Posterior vena cava (tissue), 2 donors: ENCODE measurements at regions of chr19 and their contacts with region 1.

Region 1: DNA sequence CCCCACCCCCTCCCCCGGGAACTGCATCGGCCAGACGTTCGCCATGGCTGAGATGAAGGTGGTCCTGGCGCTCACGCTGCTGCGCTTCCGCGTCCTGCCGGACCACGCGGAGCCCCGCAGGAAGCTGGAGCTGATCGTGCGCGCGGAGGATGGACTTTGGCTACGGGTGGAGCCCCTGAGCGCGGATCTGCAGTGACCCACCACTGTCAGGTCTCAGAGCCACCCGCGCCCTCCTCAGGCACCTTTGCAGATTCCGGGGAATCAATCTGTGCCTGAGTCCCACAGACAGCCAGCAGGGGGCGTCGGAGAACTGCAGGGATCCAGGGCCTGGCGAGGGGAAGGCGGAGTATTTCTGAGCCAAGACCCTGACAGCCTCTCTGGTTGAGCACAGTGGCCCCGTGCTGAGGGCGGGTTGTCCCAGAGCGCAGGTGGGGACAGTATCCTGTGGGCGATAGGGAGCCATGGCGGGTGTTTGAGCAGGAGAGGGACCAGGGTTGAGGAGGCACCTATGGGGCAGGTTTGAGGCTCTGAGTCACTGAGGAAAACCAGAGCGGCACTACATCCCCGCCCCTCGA is 30.4 kb upstream of the CYP4F8 start:
- DNase-seq: peak; percentile 94

Region 2: GRCh38 chr19:15466851-15467733 is 117.5 kb before region 1 on chr19:
- intact Hi-C with region 1: no loop called
- DNase-seq: no peak

Region 3: DNA sequence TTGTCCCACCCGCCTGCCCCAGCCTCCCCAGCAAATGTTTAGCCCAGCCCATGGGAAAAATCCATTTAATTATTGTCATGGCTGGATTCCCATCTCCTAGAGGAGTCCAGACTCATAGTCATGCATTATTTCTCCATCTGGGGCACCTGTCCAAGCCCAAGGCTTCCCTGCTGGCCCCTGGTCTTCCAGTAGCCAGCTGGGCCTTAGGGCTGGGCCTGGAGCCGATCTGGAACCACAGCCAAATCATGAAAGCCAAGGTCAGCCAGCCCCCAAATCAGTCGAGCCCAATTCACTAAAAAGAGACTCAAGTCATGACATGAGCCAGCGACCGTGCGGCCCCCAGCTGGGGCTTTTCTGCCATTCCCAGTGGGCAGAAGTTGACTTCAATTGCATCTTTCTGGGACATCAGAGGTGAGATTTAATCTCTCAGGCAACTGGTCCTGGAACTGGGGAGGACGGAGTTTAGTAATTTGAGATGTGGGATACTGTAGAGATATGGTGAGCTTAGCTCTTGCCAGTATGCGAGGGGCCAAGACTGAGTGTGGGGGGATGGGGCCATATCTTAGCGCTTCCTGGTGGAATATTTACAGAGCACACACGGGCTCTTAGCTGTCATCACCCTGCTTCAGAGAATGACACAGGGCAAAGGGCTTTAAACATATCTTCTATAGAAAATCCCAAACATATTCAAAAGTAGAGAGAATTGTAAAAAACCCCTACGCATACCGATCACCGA is 96.0 kb before region 1 on chr19:
- intact Hi-C with region 1: no loop called
- DNase-seq: no peak

Region 4: DNA sequence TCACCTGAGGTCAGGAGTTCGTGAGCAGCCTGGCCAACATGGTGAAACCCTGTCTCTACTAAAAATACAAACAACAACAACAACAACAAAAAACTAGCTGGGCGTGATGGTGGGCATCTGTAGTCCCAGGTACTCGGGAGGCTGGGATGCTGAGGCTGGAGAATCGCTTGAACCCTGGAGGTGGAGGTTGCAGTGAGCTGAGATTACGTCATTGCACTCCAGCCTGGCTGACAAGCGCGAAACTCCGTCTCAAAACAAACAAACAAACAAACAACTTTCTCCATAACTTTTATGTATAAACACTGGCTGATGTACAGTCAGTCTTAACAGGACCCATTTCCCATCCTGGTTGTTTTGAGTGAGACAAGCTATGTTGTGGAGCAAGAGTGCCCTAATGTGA is 24.6 kb after region 1 on chr19:
- intact Hi-C with region 1: loop called in 1 of 2 experiments (anchors 2 kb)
- DNase-seq: no peak